Heart left ventricle (tissue), 16 donors: ENCODE measurements at regions of chr21 and their contacts with region 1.

Region 1: DNA sequence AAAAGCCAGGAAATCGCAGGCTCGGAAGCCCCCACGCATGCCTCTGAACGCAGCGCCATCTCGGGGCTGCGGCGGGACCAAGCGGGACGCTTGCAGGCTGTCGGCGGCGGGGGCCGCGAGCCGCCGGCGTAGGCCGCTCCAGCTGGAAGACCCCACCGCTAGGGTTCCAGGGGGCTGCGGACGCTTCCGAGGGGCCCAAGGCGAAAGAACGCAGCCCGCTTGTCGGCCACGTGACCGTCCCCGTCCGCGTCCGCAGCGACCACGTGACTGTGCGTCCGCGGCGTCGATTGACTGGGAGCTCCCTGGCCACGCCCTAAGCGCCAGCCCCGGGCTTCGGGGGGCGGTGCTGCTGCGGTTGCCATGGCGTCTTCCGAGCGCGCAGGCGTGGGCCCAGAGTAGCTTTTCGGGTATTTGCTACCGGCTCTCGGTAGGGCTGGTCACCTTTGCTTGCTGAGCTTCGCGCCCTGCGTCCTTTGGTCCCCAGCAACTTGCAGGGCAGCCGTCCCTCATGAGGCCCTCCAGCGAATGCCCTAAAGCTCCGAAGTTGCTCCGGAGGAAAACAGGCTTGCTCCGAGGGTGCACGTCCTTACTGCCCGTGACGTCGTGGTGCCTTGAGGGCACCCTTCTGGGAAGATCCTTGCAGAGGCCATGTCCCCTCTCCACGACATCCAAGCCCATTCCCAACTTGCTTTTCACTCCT is 197.2 kb downstream of the DYRK1A start:
- DNase-seq: peak; percentile 94 to 97 (median 96)
- ATAC-seq: peak; percentile 94 to 96 (median 95)
- H3K4me3 ChIP-seq: peak overlapping the region; percentile 57 to 89 (median 74)
- H3K27ac ChIP-seq: peak overlapping the region; percentile 81 to 97 (median 92)
- H3K4me1 ChIP-seq: peaks cover 0 to 31% (median 13%) of the 10 kb centered on the region in 12 donors
- H3K27me3 ChIP-seq: no peaks in the 10 kb centered on the region
- CTCF ChIP-seq: peak in 11 of 12 donors; percentile 26 to 69 (median 42)
- POLR2A ChIP-seq: peak in 1 of 2 donors; percentile 85

Region 2: GRCh38 chr21:37220981-37221664 is 342.7 kb before region 1 on chr21:
- intact Hi-C with region 1: loop called in 1 of 10 experiments (anchors 5 kb)
- DNase-seq: peak; percentile 95 to 97 (median 97)
- ATAC-seq: peak; percentile 96 to 98 (median 96)
- H3K4me3 ChIP-seq: peak overlapping the region; percentile 38 to 84 (median 70)
- H3K27ac ChIP-seq: peak overlapping the region; percentile 71 to 94 (median 86)
- H3K4me1 ChIP-seq: peaks cover 0 to 18% (median 10%) of the 10 kb centered on the region in 12 donors
- H3K27me3 ChIP-seq: no peaks in the 10 kb centered on the region
- CTCF ChIP-seq: peak; percentile 2 to 76 (median 50)
- POLR2A ChIP-seq: peak in 1 of 2 donors; percentile 65

Region 3: DNA sequence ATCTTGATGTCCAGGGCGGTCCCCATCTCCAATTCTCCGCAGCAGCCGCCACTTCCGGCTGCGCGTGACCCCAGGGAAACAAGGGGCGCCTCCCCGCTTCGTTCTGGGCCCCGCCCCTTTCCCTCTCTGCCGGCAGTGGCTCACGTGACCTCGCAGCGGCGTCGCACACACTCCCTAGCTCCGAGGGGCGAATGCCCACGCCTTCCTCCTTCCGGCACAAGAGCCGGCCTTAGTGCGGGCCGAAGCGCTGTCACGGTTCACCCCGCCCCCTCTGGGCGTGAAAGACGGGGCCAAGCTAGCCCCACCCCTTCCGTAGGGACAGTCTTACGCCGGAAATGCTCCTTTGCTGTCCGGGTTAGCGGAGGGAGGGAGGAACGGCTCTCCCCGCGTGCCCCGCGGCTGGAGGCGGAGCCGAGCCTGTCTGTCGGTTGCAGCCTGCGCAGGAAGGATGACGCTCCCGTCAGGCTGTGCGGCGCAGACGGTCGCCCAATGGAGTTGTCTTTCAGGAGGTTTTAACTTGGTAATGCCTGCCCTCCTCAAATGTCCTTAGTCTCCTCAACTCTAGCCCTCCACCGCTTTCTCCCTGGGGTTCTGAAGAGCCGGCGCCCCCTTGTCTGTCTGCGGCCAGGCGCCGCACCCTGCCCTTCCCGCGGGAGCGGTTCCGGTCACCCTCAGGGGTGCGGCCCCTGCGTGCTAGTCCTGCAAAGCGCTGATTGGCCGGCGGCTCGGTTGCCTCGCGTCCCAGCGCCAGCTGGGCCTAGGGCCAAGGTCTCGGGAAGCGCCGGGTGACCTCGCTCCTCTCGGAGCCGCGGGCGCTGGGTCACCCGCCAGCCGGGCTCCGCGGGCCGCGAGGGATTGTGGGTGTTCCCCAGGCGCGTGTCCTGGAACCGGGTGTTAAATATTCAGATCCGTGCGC is 296.3 kb before region 1 on chr21 and contains the start of gene VPS26C:
- intact Hi-C with region 1: loop called in 5 of 10 experiments (anchors 2 to 5 kb)
- DNase-seq: peak; percentile 98 to 99 (median 99)
- ATAC-seq: peak; percentile 95 to 98 (median 97)
- H3K4me3 ChIP-seq: peak within 1 kb of the TSS; percentile 69 to 95 (median 90)
- H3K27ac ChIP-seq: peak within 1 kb of the TSS; percentile 91 to 100 (median 96)
- H3K4me1 ChIP-seq: peaks cover 0 to 48% (median 27%) of the 10 kb centered on the region in 12 donors
- H3K27me3 ChIP-seq: no peaks in the 10 kb centered on the region
- CTCF ChIP-seq: peak in 2 of 12 donors; percentile 7 to 11
- POLR2A ChIP-seq: peak; percentile 16 to 68
- total RNA-seq, gene VPS26C: 42.1 to 88.6 (median 53.5) TPM

Region 4: DNA sequence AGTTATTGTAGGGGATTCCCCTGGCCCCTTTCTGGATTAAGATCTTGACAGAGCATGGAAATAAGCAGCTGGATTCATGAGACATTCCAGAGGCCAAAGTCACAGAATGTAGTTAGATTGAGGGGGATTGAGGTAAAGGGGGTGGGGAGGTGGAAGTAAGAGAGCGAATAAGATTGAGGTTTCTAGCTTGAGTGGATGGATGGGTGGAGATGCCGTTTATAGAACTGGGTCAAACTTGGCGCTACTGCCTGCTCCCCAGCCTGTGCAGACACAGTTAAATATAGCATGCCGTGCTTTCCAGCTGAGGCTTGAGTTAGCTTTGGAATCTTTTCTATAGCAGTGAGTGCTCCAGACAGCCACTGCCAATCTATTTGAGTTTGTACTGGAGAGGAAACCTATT is 111.6 kb before region 1 on chr21:
- intact Hi-C with region 1: loop called in 1 of 10 experiments (anchors 5 kb)
- DNase-seq: peak in 4 of 5 donors; percentile 54 to 72 (median 58)
- ATAC-seq: peak; percentile 85 to 93 (median 90)
- H3K4me3 ChIP-seq: no peak overlapping the region
- H3K27ac ChIP-seq: peak overlapping the region; percentile 18 to 67 (median 50)
- H3K4me1 ChIP-seq: peaks cover 6 to 97% (median 76%) of the 10 kb centered on the region in 12 donors
- H3K27me3 ChIP-seq: no peaks in the 10 kb centered on the region
- CTCF ChIP-seq: no peak
- POLR2A ChIP-seq: no peak

Region 5: DNA sequence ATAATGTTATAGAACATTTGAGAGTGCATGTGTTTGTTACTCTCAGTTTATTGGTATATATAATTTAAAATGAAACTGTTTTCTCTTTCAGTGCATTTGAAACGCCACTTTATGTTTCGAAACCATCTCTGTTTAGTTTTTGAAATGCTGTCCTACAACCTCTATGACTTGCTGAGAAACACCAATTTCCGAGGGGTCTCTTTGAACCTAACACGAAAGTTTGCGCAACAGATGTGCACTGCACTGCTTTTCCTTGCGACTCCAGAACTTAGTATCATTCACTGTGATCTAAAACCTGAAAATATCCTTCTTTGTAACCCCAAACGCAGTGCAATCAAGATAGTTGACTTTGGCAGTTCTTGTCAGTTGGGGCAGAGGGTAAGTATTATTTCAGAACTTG is 73.7 kb before region 1 on chr21:
- intact Hi-C with region 1: loop called in 2 of 10 experiments (anchors 5 to 10 kb)
- DNase-seq: no peak
- ATAC-seq: no peak
- H3K4me3 ChIP-seq: no peak overlapping the region
- H3K27ac ChIP-seq: no peak overlapping the region
- H3K4me1 ChIP-seq: peaks cover 5 to 28% (median 14%) of the 10 kb centered on the region in 12 donors
- H3K27me3 ChIP-seq: no peaks in the 10 kb centered on the region
- CTCF ChIP-seq: no peak
- POLR2A ChIP-seq: no peak